Brain microvascular endothelial cell (primary cell): ENCODE measurements at regions of chr10 and their contacts with region 1.

Region 1: DNA sequence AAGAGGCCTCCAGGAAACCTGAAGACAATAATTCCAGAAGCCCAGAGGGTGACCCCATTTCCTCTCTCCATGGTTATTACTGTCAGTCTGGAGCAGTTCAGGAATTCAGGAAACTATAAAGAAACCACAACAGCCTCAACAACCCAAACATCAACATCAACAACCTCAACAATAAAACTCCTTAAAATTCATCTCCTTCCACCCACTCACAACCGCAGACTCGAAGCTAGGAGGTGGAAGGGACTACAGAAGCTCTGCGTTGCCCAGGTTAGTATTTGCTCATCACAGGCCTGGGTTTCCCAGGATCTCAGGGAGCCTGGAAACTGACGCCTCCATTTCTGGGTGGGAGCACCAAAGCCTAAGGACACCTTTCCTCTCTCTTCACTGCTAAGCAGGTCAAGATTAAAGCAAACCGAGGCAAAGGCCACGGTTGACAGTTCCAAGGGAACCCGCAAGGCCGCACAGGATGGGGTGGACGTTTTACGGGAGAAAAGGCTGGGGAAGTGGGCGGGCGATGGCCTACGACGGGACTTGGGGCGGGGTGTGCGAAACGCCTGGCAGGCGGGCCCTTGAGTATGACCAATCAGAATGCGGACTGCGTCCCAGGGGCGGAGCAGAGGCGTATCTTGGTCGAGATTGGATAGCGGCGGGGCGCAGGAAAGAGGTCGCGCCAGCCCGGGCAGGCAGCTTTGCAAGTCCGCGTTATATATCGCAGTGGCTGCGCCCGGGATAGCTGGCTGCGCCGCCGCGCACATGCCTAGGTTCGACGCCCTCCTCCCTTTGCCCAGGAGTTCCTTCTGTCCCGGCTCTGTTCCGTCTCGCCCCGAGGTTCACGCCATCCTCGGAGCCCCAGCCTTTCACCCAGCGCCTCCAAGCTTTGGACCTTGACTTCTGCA is at the start of gene ELOVL3:
- DNase-seq: peak; percentile 94
- H3K4me3 ChIP-seq: peak within 1 kb of the TSS; percentile 37
- H3K27ac ChIP-seq: peak within 1 kb of the TSS; percentile 9
- H3K27me3 ChIP-seq: peaks cover 4% of the 10 kb centered on the region
- CTCF ChIP-seq: no peak

Region 2: GRCh38 chr10:102175415-102175814 is 50.5 kb before region 1 on chr10:
- in situ Hi-C with region 1: loop called (anchors 10 kb)
- DNase-seq: peak; percentile 63
- H3K4me3 ChIP-seq: no peak overlapping the region
- H3K27ac ChIP-seq: peak overlapping the region; percentile 9
- H3K27me3 ChIP-seq: no peaks in the 10 kb centered on the region
- CTCF ChIP-seq: no peak

Region 3: DNA sequence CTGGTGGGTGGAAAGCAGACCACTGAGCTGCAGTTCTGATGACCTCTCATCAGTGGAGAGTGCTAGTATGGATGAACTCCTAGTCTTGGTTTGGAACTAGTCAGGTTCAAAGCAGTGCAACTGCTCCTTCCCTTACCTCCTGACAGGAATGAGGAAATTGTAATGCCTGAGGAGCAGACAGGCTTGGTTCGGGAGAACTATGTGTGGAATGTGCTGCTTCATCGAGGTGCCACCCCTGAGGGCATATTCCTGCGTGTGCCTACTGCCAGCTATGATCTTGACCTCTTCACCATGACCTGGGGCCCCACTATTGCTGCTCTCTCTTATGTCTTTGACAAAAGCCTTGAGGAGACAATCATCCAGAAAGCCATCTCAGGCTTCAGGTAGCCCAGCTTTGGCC is 142.2 kb after region 1 on chr10:
- in situ Hi-C with region 1: loop called (anchors 10 kb)
- DNase-seq: no peak
- H3K4me3 ChIP-seq: no peak overlapping the region
- H3K27ac ChIP-seq: no peak overlapping the region
- H3K27me3 ChIP-seq: no peaks in the 10 kb centered on the region
- CTCF ChIP-seq: no peak